GM18951 (cell line): ENCODE measurements at regions of chr4 and their contacts with region 1.

Region 1: DNA sequence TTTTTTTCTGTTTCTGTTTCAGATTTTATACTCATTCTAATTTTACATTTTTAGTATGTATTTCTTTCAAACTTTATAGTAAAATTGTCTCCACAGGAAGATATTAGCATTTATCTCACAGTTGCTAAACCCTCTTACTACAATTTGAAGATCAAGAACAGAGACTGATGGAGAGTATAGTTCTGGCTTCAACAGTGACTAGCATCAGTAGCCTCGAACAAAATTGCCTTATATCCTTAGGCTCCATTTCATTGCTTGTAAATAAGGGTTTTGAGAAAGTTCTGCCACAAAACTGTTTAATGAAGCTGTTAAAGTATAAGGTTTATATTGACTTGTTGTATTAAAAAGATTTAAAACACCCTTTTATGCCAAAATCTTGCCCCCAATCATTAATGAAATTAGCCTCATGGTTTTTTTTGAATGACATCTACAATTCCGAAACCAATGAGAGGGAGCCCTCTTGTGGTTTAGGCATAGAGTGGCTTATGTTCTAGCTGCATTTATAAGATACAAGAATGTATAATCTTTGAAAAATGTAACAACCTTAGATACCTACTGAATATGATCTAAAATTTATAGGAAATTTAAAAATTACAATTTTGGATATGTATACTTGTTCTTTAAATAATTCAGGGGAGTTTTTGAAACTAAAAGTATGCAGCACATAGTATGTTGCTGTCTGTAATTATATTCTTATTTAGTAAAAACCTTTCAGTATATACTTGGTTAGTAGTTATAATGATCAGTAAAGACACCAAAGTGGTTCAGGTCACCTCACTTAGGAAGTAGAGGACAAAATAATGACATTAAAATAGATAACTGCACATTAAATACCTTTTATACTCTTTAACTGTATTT is 109.8 kb upstream of the HPGD start:
- POLR2A ChIP-seq: no peak

Region 2: DNA sequence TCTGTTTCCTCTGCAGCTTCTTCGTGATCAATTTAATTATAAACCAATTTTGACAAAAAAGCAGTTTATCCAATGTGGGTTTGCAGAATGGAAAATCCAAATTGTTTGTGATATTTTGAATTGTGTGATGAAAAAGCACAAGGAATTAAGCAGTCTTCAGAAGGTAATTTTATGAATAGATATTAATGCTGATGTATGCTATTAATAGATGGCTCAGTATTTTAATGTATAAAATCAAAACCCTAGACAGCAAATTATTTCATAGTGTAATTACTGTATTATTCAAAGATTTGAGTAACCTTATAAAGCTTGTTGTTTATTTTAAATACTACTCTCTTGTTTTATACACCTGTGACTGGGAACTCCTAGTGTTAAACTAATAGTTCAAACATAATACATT is 328.4 kb before region 1 on chr4:
- in situ Hi-C with region 1: no loop called
- POLR2A ChIP-seq: no peak

Region 3: DNA sequence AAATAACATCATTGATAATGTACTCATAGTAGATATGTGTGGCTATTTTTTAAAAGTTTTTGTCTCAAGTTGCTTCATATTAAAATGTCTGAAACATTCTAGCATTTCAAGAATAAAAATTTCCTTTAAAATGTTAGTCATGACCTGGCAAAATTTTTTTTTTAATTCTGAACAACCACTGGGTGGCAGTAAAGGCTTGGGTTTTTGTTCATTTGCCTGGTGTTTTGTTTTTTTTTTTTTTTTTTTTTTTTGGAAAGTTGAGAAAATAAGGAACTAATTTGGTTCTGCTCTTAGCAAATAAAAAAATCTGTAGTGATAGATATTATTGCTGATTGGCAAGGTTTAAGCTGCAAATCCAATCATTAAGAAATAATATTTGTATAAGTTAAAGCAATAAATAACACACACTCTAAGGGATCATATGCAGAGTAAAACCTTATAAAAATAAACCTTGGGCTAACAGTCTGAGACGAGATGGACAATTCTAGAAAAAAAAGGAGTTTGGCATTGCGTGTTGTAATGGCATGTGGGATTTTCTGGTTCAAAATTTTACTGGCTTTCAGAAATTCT is 267.0 kb before region 1 on chr4:
- in situ Hi-C with region 1: loop called (anchors 10 kb)
- POLR2A ChIP-seq: no peak

Region 4: DNA sequence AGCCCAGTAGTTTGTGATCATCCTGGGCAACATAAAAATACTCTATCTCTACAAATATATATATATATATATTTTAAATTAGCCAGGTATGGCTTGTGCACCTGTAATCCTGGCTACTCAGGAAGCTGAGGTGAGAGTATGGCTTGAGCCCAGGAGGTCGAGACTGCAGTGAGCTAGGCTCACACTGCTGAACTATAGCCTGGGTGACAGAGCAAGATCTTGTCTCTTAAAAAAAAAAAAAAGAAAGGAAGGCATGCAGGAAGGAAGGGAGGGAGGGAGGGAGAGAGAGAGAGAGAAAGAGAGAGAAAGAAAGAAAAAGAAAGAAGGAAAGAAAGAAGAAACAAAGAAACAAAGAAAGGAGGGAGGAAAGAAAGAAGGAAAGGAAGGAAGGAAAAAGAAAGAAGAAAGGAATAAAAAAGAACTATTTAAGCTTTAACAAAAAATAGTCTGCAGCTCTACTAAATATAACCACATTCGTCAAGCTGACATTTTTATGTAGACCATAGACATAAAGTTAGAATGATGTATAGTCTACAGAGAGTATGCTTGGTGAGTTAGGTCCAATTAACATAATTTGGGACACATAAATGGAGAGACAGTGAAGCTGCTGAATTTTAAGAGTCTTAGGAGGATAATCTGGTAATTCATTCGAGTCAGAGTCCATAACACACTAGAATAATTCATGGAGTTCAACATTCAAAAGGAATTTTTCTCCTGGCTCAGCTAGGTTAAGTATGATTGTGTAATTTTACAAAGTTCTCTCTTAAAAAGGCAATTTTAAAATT is 85.0 kb after region 1 on chr4:
- in situ Hi-C with region 1: no loop called
- POLR2A ChIP-seq: no peak